B cell (primary cell): ENCODE measurements at regions of chr1 and their contacts with region 1.

Region 1: DNA sequence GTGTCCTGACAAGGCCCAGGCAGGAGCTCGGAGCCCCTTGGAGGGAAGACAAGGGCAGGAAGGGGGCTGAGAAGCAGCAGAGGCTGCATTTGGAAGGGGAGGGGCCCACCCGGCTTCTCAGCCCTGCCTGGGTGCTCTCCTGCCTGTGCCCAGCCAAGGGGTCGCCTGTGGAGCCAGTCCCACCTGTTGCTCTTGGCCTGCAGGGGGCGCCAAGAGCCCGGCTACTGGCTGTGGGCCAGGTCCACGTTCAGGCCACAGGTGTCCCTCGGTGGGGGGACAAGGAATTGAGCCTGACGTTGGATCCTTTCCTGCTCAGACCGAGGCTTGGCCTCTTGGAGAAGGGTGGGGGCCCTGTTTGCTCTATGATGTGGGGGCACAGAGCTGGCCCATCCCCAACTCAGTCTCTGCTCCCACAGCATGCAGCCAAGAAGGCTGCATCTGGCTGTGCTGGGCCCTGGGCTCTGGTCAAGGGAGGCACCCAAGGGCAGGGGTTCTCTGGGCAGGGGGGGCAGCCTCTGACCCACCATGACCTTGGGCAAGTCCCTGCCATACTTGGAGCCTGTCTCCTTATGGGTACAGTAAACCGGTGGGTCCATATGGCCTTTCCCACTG is 10.9 kb downstream of the WNT4 start:
- DNase-seq: peak; percentile 73
- ATAC-seq: peak; percentile 66
- H3K4me3 ChIP-seq: no peak overlapping the region
- H3K4me3 Mint-ChIP-seq: no peak overlapping the region
- H3K27ac ChIP-seq: no peak overlapping the region
- H3K27ac Mint-ChIP-seq: no peak overlapping the region
- H3K4me1 ChIP-seq: peaks cover 0 to 3% of the 10 kb centered on the region in 2 donors
- H3K4me1 Mint-ChIP-seq: no peaks in the 10 kb centered on the region
- H3K27me3 ChIP-seq: peaks cover 0 to 13% (median 3%) of the 10 kb centered on the region in 4 experiments
- H3K27me3 Mint-ChIP-seq: peaks cover 6% of the 10 kb centered on the region
- CTCF ChIP-seq: peak; percentile 83

Region 2: DNA sequence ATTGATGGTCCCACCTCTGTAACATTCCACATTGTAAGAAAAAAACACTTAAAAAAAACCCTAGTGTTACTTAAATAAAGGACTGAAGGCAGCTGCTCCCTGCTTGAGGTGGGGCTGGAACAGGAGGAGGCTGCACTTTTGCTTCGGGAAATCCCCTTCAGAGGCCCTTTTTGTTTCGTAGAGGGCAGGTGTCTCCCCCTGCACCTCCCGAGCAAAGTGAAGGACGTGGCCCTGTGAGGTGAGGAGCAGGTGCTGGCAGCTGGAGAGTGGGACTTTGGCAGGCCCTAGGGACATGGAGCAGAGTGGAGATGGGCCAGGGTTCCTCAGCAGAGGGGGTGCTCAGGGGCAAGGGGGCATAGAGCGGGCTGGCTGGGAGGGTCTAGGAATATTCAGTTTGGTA is 44.3 kb after region 1 on chr1:
- CTCF ChIA-PET with region 1: no interaction called
- POLR2A ChIA-PET with region 1: no interaction called
- intact Hi-C with region 1: no loop called
- DNase-seq: peak; percentile 23
- ATAC-seq: no peak
- H3K4me3 ChIP-seq: no peak overlapping the region
- H3K4me3 Mint-ChIP-seq: no peak overlapping the region
- H3K27ac ChIP-seq: no peak overlapping the region
- H3K27ac Mint-ChIP-seq: no peak overlapping the region
- H3K4me1 ChIP-seq: no peaks in the 10 kb centered on the region
- H3K4me1 Mint-ChIP-seq: peaks cover 6% of the 10 kb centered on the region
- H3K27me3 ChIP-seq: no peaks in the 10 kb centered on the region
- H3K27me3 Mint-ChIP-seq: peaks cover 8% of the 10 kb centered on the region
- CTCF ChIP-seq: no peak

Region 3: GRCh38 chr1:22641906-22642636 is 510.1 kb after region 1 on chr1:
- CTCF ChIA-PET with region 1: interaction called, 10 read pairs
- POLR2A ChIA-PET with region 1: no interaction called
- intact Hi-C with region 1: no loop called
- DNase-seq: peak; percentile 73
- ATAC-seq: peak; percentile 81
- H3K4me3 ChIP-seq: no peak overlapping the region
- H3K4me3 Mint-ChIP-seq: no peak overlapping the region
- H3K27ac ChIP-seq: no peak overlapping the region
- H3K27ac Mint-ChIP-seq: no peak overlapping the region
- H3K4me1 ChIP-seq: peaks cover 0 to 4% of the 10 kb centered on the region in 2 donors
- H3K4me1 Mint-ChIP-seq: no peaks in the 10 kb centered on the region
- H3K27me3 ChIP-seq: peaks cover 0 to 24% (median 0%) of the 10 kb centered on the region in 4 experiments
- H3K27me3 Mint-ChIP-seq: peaks cover 20% of the 10 kb centered on the region
- CTCF ChIP-seq: peak; percentile 81